Activated CD8-positive, alpha-beta memory T cell treated with anti-CD3 and anti-CD28 coated beads, Interleukin-2, amount 10 ng/mL, durations not matched to agents 7 days and 5 days (primary cell): ENCODE measurements at regions of chr14 and their contacts with region 1.

Region 1: DNA sequence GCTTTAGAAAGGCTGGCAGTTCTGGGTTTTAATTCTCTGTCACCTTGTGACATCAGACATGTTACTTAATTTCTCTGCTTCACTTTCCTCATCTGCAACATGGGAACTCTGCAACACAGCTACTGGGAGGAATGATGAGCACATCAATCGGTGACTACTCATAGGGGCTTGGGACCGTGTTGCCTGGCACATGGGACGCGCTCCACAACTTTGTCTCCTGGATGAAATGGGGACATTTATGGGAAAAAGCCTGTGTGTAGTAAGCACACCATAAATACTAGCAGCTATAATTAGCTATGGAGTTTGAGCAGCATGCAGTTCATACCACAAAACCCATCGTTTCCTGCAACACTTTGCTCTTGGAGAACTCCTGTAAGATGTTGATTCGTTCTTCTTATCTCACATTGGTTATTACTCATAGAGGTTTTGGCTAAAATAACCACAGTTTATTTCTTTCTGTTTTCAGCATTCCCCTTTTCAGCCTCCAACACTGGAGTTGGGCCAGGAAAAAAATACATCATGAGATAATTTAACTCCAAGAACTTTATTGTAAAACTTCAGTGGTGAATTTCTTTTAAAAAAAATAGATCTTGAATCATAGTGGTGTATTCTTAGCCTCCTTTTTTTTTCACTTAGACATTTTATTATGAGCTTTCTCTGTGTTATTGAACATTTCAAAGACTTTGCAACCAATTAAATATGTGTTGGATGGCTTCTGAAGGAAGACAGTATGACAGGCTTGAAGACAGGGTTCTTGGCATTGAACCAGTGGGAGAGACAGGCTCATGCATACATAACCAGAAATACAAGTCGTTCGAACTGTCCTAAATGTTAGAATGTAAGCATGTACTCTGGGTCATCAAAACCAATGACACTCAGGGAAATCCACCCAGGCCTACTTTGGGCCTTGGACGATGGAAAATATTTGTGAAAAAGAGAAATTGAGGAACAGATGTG is 72.7 kb downstream of the RIN3 start:
- DNase-seq: peak; percentile 79
- ATAC-seq: peak; percentile 71
- H3K4me3 Mint-ChIP-seq: peak overlapping the region; percentile 58
- H3K27ac Mint-ChIP-seq: peak overlapping the region; percentile 89
- H3K4me1 Mint-ChIP-seq: peaks cover 94% of the 10 kb centered on the region
- H3K27me3 Mint-ChIP-seq: peaks cover 2% of the 10 kb centered on the region

Region 2: GRCh38 chr14:92323011-92323915 is 263.0 kb before region 1 on chr14 and contains the start of gene SLC24A4:
- CTCF ChIA-PET with region 1: no interaction called
- DNase-seq: no peak
- ATAC-seq: peak; percentile 61
- H3K4me3 Mint-ChIP-seq: peak within 1 kb of the TSS; percentile 27
- H3K27ac Mint-ChIP-seq: no peak within 1 kb of the TSS
- H3K4me1 Mint-ChIP-seq: peaks cover 3% of the 10 kb centered on the region
- H3K27me3 Mint-ChIP-seq: peaks cover 81% of the 10 kb centered on the region
- total RNA-seq, gene SLC24A4: not detected

Region 3: GRCh38 chr14:92563359-92563758 is 22.9 kb before region 1 on chr14:
- CTCF ChIA-PET with region 1: interaction called, 11 read pairs
- DNase-seq: peak; percentile 73
- ATAC-seq: peak; percentile 85
- H3K4me3 Mint-ChIP-seq: peak overlapping the region; percentile 38
- H3K27ac Mint-ChIP-seq: peak overlapping the region; percentile 76
- H3K4me1 Mint-ChIP-seq: peaks cover 71% of the 10 kb centered on the region
- H3K27me3 Mint-ChIP-seq: no peaks in the 10 kb centered on the region

Region 4: GRCh38 chr14:92622311-92622710 is 36.1 kb after region 1 on chr14:
- CTCF ChIA-PET with region 1: no interaction called
- DNase-seq: no peak
- ATAC-seq: no peak
- H3K4me3 Mint-ChIP-seq: no peak overlapping the region
- H3K27ac Mint-ChIP-seq: no peak overlapping the region
- H3K4me1 Mint-ChIP-seq: peaks cover 4% of the 10 kb centered on the region
- H3K27me3 Mint-ChIP-seq: no peaks in the 10 kb centered on the region

Region 5: GRCh38 chr14:92680781-92681650 is 94.8 kb after region 1 on chr14:
- CTCF ChIA-PET with region 1: interaction called, 17 read pairs
- DNase-seq: peak; percentile 84
- ATAC-seq: peak; percentile 75
- H3K4me3 Mint-ChIP-seq: no peak overlapping the region
- H3K27ac Mint-ChIP-seq: peak overlapping the region; percentile 36
- H3K4me1 Mint-ChIP-seq: peaks cover 36% of the 10 kb centered on the region
- H3K27me3 Mint-ChIP-seq: no peaks in the 10 kb centered on the region